ENCODE measurements at regions of chrX and their contacts with region 1.

Region 1: GRCh38 chrX:63754860-63755582 is 30.0 kb downstream of the ARHGEF9 start:
- DNase-seq: peak; percentile 90
- H3K4me3 ChIP-seq: peak overlapping the region; percentile 83
- H3K27ac ChIP-seq: peak overlapping the region; percentile 62
- H3K4me1 ChIP-seq: peaks cover 6% of the 10 kb centered on the region
- CTCF ChIP-seq: no peak

Region 2: DNA sequence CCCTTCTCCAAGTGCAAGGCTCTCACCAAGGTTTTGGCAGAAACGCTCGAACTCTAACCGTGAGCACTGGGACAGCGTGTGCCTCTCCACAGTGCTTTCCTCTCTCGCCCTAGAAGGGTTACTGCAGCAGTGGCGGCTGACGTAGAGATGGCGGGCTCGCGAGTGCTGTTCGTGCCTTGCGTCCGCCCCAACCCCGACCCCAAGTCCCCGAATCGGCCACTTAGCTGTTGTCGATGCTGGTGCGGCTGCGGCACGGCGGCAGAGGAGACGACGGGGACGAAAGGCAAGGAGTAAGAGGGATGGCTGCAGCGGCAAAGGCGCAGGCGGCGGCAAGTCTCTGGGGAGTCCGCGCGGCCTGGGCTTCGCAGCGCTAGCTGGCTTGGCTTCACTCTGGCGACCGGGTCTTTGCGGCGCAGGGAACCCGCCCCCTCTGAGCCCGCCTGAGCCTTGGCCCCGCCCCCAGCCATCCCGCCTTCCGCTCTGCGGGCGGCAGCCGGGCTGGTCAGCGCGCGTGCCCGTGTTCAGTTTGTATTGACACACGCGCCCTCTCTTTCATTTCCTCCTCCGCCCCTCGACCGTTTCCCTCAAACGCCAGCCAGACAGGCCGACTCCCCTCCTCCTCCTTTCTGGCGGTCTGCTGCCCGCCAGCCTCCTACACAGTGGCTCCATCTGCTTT is 403.9 kb before region 1 on chrX and contains the start of gene SPIN4:
- CTCF ChIA-PET with region 1: no interaction called
- POLR2A ChIA-PET with region 1: no interaction called
- intact Hi-C with region 1: loop called (anchors 5 kb)
- DNase-seq: peak; percentile 87
- H3K4me3 ChIP-seq: peak within 1 kb of the TSS; percentile 90
- H3K27ac ChIP-seq: peak within 1 kb of the TSS; percentile 86
- H3K4me1 ChIP-seq: peaks cover 4% of the 10 kb centered on the region
- CTCF ChIP-seq: no peak
- total RNA-seq, gene SPIN4: 9.6 and 10.5 TPM in 2 replicates

Region 3: DNA sequence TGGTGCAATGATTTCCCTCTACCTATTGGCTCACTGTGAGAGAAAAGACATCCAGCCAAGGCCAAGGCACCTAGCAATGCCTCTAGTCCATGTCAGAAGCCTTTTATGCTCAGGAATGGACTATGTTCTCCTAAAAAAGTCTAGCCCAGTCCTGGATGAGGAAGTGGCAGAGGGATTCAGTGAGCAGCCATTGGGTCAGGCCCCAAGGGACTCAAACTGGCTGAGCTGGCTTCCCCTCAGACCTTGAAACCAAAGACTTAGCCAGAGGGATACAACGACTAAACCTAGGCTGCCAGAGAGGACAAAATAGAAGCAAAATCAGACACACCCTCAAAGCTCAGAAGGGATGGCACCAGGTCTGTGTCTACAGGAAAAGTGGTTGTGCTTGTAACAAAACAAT is 19.1 kb before region 1 on chrX:
- CTCF ChIA-PET with region 1: no interaction called
- POLR2A ChIA-PET with region 1: interaction called, 10 read pairs
- intact Hi-C with region 1: no loop called
- DNase-seq: no peak
- H3K4me3 ChIP-seq: no peak overlapping the region
- H3K27ac ChIP-seq: no peak overlapping the region
- H3K4me1 ChIP-seq: no peaks in the 10 kb centered on the region
- CTCF ChIP-seq: no peak

Measured in OCI-LY7 (cell line).